Ovary (tissue), 10 donors: ENCODE measurements at regions of chr2 and their contacts with region 1.

Region 1: GRCh38 chr2:46699934-46700256 is 215.7 kb downstream of the MCFD2 start:
- DNase-seq: no peak
- H3K4me3 ChIP-seq: peak overlapping the region; percentile 68
- H3K27ac ChIP-seq: peak overlapping the region in 1 of 2 donors; percentile 97
- H3K4me1 ChIP-seq: peaks cover 6% of the 10 kb centered on the region
- H3K27me3 ChIP-seq: no peaks in the 10 kb centered on the region
- CTCF ChIP-seq: no peak
- EP300 ChIP-seq: no peak
- POLR2A ChIP-seq: no peak

Region 2: DNA sequence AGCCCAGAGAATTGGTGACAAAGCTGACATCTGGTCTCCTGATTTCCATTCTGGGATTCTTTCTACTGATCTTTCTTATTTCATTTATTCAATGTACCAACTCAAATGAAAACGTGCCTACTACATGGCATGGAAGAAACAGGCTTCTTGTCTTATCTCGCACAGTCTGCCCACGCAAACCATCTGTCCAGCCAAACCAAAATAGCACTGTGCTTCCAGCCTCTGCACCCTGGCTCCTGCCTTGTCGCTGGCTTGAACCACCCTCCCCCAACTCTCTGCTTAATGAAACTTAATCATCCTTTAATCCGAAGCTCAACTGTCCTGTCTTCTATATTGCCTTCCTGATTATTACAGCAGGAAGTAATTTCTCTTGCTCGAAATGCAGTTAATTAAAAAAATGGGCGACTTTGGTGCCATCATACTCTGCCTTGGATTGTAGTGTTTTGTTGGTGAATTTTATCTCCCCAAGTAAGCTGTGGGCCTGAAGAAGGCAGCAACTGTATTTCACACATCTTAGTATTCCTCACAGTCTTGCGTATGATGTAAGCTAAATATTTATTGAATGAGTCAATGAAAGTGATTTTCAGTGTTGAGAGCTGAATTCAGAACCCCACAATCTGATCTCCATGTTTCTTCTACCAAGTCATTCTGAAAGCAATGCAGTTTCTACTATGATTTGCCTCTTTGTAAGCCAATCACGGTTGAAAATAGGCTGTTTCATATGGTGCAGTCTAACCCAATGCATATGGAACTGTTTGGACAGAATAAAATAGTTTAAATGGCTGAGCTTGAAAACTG is 29.7 kb before region 1 on chr2:
- intact Hi-C with region 1: no loop called
- DNase-seq: no peak
- H3K4me3 ChIP-seq: no peak overlapping the region
- H3K27ac ChIP-seq: no peak overlapping the region
- H3K4me1 ChIP-seq: peaks cover 9% of the 10 kb centered on the region
- H3K27me3 ChIP-seq: no peaks in the 10 kb centered on the region
- CTCF ChIP-seq: no peak
- EP300 ChIP-seq: no peak
- POLR2A ChIP-seq: no peak

Region 3: GRCh38 chr2:46847235-46848068 is 147.6 kb after region 1 on chr2:
- intact Hi-C with region 1: loop called in 1 of 4 experiments (anchors 10 kb)
- DNase-seq: peak; percentile 93 to 98 (median 96)
- H3K4me3 ChIP-seq: no peak overlapping the region
- H3K27ac ChIP-seq: peak overlapping the region; percentile 93 to 96
- H3K4me1 ChIP-seq: peaks cover 51% of the 10 kb centered on the region
- H3K27me3 ChIP-seq: no peaks in the 10 kb centered on the region
- CTCF ChIP-seq: no peak
- EP300 ChIP-seq: peak; percentile 1
- POLR2A ChIP-seq: no peak